ENCODE measurements at regions of chr6 and their contacts with region 1.

Region 1: GRCh38 chr6:28895134-28895812 is 28.5 kb downstream of the TRIM27 start:
- DNase-seq: peak; percentile 96
- H3K4me3 Mint-ChIP-seq: peak overlapping the region; percentile 90
- H3K27ac Mint-ChIP-seq: peak overlapping the region; percentile 100
- H3K4me1 Mint-ChIP-seq: no peaks in the 10 kb centered on the region
- H3K27me3 Mint-ChIP-seq: no peaks in the 10 kb centered on the region
- CTCF ChIP-seq: no peak

Region 2: DNA sequence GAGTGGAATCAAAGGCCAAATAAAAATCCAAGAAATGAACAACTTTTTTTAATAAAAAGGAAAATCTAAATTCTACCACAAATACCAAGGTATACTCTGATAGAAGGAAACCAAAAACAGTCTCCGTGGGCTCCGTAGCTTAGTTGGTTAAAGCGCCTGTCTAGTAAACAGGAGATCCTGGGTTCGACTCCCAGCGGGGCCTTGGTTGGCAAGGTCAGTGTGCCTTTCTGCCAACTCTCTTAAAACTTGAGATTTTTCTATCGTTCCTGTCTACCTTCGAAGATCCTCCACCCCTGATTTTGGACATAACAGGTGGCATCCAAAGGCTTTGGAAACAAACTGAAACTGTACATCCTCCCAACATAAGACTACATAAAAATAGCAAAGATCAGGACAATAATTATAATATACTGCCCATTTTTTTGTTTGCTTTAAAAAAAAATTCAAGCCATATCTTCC is 169.4 kb before region 1 on chr6:
- CTCF ChIA-PET with region 1: interaction called, 3 read pairs
- POLR2A ChIA-PET with region 1: interaction called, 4 read pairs
- intact Hi-C with region 1: loop called (anchors 5 kb)
- DNase-seq: no peak
- H3K4me3 Mint-ChIP-seq: no peak overlapping the region
- H3K27ac Mint-ChIP-seq: no peak overlapping the region
- H3K4me1 Mint-ChIP-seq: peaks cover 3% of the 10 kb centered on the region
- H3K27me3 Mint-ChIP-seq: no peaks in the 10 kb centered on the region
- CTCF ChIP-seq: no peak

Region 3: DNA sequence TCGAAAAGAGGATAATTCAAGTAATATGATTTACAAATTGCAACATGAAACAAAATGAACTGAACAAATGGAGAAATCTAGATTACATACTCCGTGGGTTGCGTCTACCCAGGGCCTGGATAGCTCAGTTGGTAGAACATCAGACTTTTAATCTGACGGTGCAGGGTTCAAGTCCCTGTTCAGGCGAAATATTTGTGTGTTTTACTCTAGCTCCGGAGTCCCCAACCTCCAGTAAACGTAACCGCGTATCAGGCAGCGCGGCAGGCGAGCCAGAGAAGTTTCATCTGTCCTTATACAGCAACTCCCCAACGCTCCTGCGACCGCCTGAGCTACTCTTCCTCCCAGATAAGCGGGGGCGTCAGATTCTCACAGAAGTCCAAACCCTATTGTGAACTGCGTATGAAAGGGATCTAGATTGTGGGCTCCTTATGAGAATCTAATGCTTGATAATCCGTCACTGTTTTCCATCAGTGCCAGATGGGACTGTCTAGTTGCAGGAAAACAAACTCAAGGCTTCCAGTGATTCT is 147.6 kb before region 1 on chr6:
- CTCF ChIA-PET with region 1: no interaction called
- POLR2A ChIA-PET with region 1: no interaction called
- intact Hi-C with region 1: no loop called
- DNase-seq: peak; percentile 86
- H3K4me3 Mint-ChIP-seq: peak overlapping the region; percentile 76
- H3K27ac Mint-ChIP-seq: peak overlapping the region; percentile 81
- H3K4me1 Mint-ChIP-seq: no peaks in the 10 kb centered on the region
- H3K27me3 Mint-ChIP-seq: no peaks in the 10 kb centered on the region
- CTCF ChIP-seq: no peak

Region 4: GRCh38 chr6:28863604-28864320 is 31.5 kb before region 1 on chr6:
- CTCF ChIA-PET with region 1: interaction called, 5 read pairs
- POLR2A ChIA-PET with region 1: interaction called, 10 read pairs
- intact Hi-C with region 1: loop called (anchors 1 kb)
- DNase-seq: peak; percentile 81
- H3K4me3 Mint-ChIP-seq: peak overlapping the region; percentile 93
- H3K27ac Mint-ChIP-seq: peak overlapping the region; percentile 53
- H3K4me1 Mint-ChIP-seq: peaks cover 14% of the 10 kb centered on the region
- H3K27me3 Mint-ChIP-seq: no peaks in the 10 kb centered on the region
- CTCF ChIP-seq: peak; percentile 7

Region 5: GRCh38 chr6:28907394-28907793 is 12.1 kb after region 1 on chr6:
- CTCF ChIA-PET with region 1: interaction called, 3 read pairs
- POLR2A ChIA-PET with region 1: interaction called, 17 read pairs
- intact Hi-C with region 1: no loop called
- DNase-seq: peak; percentile 42
- H3K4me3 Mint-ChIP-seq: no peak overlapping the region
- H3K27ac Mint-ChIP-seq: peak overlapping the region; percentile 68
- H3K4me1 Mint-ChIP-seq: no peaks in the 10 kb centered on the region
- H3K27me3 Mint-ChIP-seq: no peaks in the 10 kb centered on the region
- CTCF ChIP-seq: no peak

Region 6: DNA sequence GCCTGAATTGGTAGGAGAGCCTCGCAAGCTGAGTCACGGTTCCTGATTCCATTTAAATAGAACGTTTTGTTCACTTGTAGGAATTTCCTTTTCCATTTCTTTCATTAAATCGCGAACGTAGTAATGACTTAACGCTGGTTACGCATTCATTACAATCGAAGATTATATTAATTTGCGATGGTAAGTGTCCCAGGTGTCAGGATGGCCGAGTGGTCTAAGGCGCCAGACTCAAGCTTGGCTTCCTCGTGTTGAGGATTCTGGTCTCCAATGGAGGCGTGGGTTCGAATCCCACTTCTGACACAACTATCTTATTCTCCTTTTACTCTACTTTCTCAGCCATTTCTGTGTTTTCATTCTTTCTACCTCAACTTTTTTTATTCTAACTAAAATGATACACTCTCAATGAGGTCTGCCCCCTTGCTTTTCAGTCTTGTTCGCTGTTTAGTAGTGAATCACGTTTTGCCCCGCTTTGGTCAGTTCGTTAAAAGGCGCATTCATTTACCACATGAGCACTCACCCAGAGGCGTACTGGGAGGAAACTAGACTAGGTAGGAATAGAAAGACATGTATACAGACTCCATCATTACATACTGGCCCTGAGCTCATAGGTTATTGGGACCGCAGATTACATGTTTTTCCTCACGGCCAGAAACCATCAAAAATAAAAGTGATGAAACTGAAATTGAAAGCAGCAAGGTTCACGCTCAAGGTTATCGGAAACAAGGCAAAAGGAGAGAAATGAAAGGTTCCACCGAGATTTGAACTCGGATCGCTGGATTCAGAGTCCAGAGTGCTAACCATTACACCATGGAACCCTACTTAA is 45.8 kb after region 1 on chr6:
- CTCF ChIA-PET with region 1: interaction called, 3 read pairs
- POLR2A ChIA-PET with region 1: interaction called, 18 read pairs
- intact Hi-C with region 1: loop called (anchors 1 kb)
- DNase-seq: peak; percentile 90
- H3K4me3 Mint-ChIP-seq: peak overlapping the region; percentile 83
- H3K27ac Mint-ChIP-seq: peak overlapping the region; percentile 57
- H3K4me1 Mint-ChIP-seq: peaks cover 7% of the 10 kb centered on the region
- H3K27me3 Mint-ChIP-seq: no peaks in the 10 kb centered on the region
- CTCF ChIP-seq: no peak

Measured in MCF 10A (cell line).